ENCODE measurements at regions of chr6 and their contacts with region 1.

Region 1: GRCh38 chr6:158869826-158870648 is 50.9 kb upstream of the EZR start:
- DNase-seq: peak; percentile 97
- ATAC-seq: peak; percentile 86
- H3K4me3 Mint-ChIP-seq: peak overlapping the region; percentile 74
- H3K27ac Mint-ChIP-seq: peak overlapping the region; percentile 99
- H3K4me1 Mint-ChIP-seq: peaks cover 35% of the 10 kb centered on the region
- H3K27me3 Mint-ChIP-seq: no peaks in the 10 kb centered on the region
- CTCF ChIP-seq: no peak

Region 2: GRCh38 chr6:158629367-158630221 is 240.4 kb before region 1 on chr6:
- CTCF ChIA-PET with region 1: no interaction called
- POLR2A ChIA-PET with region 1: no interaction called
- intact Hi-C with region 1: no loop called
- DNase-seq: peak; percentile 56
- ATAC-seq: peak; percentile 71
- H3K4me3 Mint-ChIP-seq: no peak overlapping the region
- H3K27ac Mint-ChIP-seq: peak overlapping the region; percentile 74
- H3K4me1 Mint-ChIP-seq: peaks cover 32% of the 10 kb centered on the region
- H3K27me3 Mint-ChIP-seq: no peaks in the 10 kb centered on the region
- CTCF ChIP-seq: no peak

Region 3: DNA sequence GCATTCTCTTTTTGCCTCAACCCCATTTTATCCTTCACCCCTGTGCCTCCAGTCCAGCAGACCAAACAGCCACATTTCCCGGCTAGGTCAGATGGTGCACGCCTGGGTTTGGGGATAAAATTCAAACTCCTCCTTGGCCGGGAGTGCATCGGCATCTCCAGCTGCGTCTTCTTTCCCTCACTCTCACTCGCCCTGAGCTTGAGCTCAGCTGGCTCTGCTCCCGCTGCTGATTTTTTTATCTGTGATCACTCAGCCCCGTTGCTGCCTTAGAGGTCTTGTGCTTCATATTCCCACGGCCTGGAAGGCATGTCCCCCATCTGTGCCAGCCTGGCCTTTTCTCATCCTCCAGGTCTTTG is 44.1 kb before region 1 on chr6:
- CTCF ChIA-PET with region 1: no interaction called
- POLR2A ChIA-PET with region 1: interaction called, 16 read pairs
- intact Hi-C with region 1: no loop called
- DNase-seq: no peak
- ATAC-seq: no peak
- H3K4me3 Mint-ChIP-seq: no peak overlapping the region
- H3K27ac Mint-ChIP-seq: no peak overlapping the region
- H3K4me1 Mint-ChIP-seq: peaks cover 19% of the 10 kb centered on the region
- H3K27me3 Mint-ChIP-seq: no peaks in the 10 kb centered on the region
- CTCF ChIP-seq: no peak

Region 4: DNA sequence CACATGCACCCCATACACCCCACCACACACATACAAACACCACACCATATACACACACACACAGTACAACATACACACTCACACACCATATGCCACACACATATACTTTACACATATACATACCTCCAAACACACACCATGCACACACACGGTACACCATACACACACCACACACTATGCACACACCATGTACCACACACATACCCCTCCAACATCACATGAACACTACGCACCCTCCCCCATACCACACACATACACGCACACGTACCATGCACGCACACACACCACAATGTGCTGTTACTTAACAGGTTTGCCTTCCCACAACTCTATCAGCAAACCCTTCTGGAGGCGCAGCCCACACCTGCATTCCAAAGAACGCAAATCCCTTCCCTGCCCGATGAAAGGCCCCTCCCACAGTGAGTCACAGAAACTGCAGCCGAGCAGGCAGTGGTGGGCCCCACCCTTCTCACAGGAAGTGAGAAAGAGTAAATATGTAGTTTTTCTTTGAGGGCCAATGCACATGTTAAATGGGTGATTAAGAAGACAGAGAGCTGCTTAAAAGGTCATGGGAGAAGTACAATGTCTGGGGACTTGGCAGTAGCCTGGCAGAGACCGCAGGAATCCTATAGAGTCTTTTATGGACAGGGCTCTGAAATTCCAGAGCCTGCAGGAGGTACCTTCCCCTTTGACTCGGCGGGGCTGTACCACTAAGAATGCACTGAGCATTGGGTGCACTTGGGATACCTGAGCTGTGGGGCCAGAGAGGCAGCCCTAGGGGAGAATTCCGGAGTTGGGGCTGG is 16.8 kb before region 1 on chr6:
- CTCF ChIA-PET with region 1: interaction called, 19 read pairs
- POLR2A ChIA-PET with region 1: interaction called, 18 read pairs
- intact Hi-C with region 1: loop called (anchors 2 kb)
- DNase-seq: peak; percentile 93
- ATAC-seq: peak; percentile 84
- H3K4me3 Mint-ChIP-seq: no peak overlapping the region
- H3K27ac Mint-ChIP-seq: no peak overlapping the region
- H3K4me1 Mint-ChIP-seq: peaks cover 31% of the 10 kb centered on the region
- H3K27me3 Mint-ChIP-seq: no peaks in the 10 kb centered on the region
- CTCF ChIP-seq: no peak

Region 5: GRCh38 chr6:158916617-158917016 is 46.6 kb after region 1 on chr6:
- CTCF ChIA-PET with region 1: no interaction called
- POLR2A ChIA-PET with region 1: interaction called, 8 read pairs
- intact Hi-C with region 1: loop called (anchors 5 kb)
- DNase-seq: no peak
- ATAC-seq: no peak
- H3K4me3 Mint-ChIP-seq: no peak overlapping the region
- H3K27ac Mint-ChIP-seq: no peak overlapping the region
- H3K4me1 Mint-ChIP-seq: peaks cover 34% of the 10 kb centered on the region
- H3K27me3 Mint-ChIP-seq: no peaks in the 10 kb centered on the region
- CTCF ChIP-seq: no peak